GM23248 (cell line): ENCODE measurements at regions of chr4 and their contacts with region 1.

Region 1: DNA sequence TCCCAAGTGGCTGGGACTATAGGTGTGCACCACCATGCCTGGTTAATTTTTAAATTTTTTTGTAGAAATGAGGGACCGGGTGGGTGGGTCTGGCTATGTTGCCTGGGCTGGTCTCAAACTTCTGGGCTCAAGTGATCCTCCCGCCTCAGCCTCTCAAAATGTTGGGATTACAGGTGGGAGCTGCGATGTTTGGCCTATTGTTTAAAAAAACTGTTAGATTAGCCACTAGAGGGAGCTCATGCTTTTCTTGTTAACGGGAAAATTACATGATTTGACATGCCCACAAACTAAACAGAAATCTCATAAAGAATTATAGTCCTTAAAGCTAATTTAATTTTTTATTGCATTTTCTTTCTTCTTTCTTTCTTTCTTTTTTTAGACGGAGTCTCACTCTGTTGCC is 5.0 kb upstream of the SDAD1 start:
- DNase-seq: peak; percentile 76
- H3K4me3 ChIP-seq: no peak overlapping the region
- H3K27ac ChIP-seq: no peak overlapping the region
- H3K4me1 ChIP-seq: no peaks in the 10 kb centered on the region
- H3K27me3 ChIP-seq: no peaks in the 10 kb centered on the region

Region 2: GRCh38 chr4:76067652-76068286 is 72.0 kb after region 1 on chr4:
- in situ Hi-C with region 1: loop called (anchors 5 kb)
- DNase-seq: peak; percentile 82
- H3K4me3 ChIP-seq: no peak overlapping the region
- H3K27ac ChIP-seq: no peak overlapping the region
- H3K4me1 ChIP-seq: no peaks in the 10 kb centered on the region
- H3K27me3 ChIP-seq: no peaks in the 10 kb centered on the region

Region 3: DNA sequence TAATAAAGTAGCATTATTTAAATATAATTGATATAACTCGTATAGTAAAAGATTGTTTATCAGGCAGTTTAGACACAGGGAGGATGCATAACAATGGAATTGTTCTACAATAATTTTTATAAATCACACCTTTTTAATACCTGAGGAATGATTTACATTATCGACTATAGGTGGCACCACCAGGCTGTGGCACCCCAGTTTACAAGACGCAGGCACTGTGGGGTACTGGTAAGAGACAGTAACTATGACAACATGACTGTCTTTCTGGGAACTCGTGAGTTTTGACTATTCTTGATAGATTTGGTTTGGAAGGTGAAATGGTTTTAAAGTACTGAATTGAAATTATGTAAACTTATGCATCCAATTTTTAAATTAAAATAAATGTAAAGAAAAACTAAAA is 283.7 kb after region 1 on chr4:
- in situ Hi-C with region 1: no loop called
- DNase-seq: no peak
- H3K4me3 ChIP-seq: no peak overlapping the region
- H3K27ac ChIP-seq: no peak overlapping the region
- H3K4me1 ChIP-seq: no peaks in the 10 kb centered on the region
- H3K27me3 ChIP-seq: peaks cover 11% of the 10 kb centered on the region; the same call in 1 of the 2 replicates